Activated CD4-positive, alpha-beta memory T cell treated with anti-CD3 and anti-CD28 coated beads, Interleukin-2, amount 10 ng/mL, durations not matched to agents 7 days and 5 days (primary cell): ENCODE measurements at regions of chr1 and their contacts with region 1.

Region 1: GRCh38 chr1:20633190-20634064 is at the start of gene PINK1:
- DNase-seq: peak; percentile 90
- H3K4me3 Mint-ChIP-seq: peak within 1 kb of the TSS; percentile 77
- H3K27ac Mint-ChIP-seq: peak within 1 kb of the TSS; percentile 44
- H3K4me1 Mint-ChIP-seq: peaks cover 14% of the 10 kb centered on the region
- H3K27me3 Mint-ChIP-seq: peaks cover 9% of the 10 kb centered on the region
- total RNA-seq, gene PINK1: 6.6 TPM

Region 2: DNA sequence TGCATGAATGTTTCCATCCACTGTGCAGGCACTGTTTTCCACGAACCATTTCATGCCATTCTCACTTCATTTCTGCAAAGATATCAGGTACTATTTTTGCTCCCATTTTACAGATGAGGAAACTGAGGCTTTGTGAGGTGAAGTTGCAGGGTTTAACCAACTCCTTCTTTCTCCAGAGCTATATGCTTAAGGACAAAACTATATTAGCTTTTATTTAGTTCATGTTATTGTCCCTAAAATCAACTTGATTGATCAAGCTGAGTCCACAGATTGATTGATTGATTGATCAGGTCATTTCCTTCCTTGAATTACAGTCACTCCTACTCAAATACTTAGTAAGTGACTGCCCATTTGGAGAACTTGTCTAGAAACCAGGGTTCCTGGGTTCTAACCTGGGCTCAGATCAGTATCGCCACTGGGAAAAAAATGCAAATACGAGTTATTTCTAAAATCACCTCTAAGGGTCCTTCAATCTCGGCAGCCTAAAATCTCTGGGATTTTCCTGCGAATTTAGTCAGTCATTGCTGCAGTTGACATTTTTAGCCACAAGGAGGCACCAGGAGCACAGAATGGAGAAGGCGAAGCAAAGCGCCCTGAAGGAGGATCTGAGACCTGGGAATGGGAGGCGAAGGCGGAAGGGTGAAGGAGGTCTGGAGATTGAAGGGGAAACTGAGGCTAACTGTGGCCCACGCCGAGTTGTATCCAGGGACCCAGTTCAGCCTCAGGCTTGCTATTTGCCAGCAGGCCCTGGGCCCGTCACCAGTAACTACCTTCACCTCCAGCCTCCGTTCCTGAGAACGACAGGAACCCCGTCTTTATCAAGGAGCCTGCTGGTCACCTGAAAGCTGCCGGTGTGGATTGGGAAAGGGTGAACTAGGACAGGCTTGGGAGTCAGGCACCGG is 111.2 kb before region 1 on chr1:
- CTCF ChIA-PET with region 1: interaction called, 19 read pairs
- POLR2A ChIA-PET with region 1: no interaction called
- DNase-seq: peak; percentile 65
- H3K4me3 Mint-ChIP-seq: no peak overlapping the region
- H3K27ac Mint-ChIP-seq: no peak overlapping the region
- H3K4me1 Mint-ChIP-seq: peaks cover 7% of the 10 kb centered on the region
- H3K27me3 Mint-ChIP-seq: peaks cover 14% of the 10 kb centered on the region

Region 3: GRCh38 chr1:20574686-20575540 is 58.5 kb before region 1 on chr1:
- CTCF ChIA-PET with region 1: interaction called, 37 read pairs
- POLR2A ChIA-PET with region 1: no interaction called
- DNase-seq: peak; percentile 77
- H3K4me3 Mint-ChIP-seq: no peak overlapping the region
- H3K27ac Mint-ChIP-seq: no peak overlapping the region
- H3K4me1 Mint-ChIP-seq: no peaks in the 10 kb centered on the region
- H3K27me3 Mint-ChIP-seq: peaks cover 24% of the 10 kb centered on the region

Region 4: GRCh38 chr1:20645414-20645813 is 12.0 kb after region 1 on chr1:
- CTCF ChIA-PET with region 1: interaction called, 22 read pairs
- POLR2A ChIA-PET with region 1: interaction called, 6 read pairs
- DNase-seq: no peak
- H3K4me3 Mint-ChIP-seq: no peak overlapping the region
- H3K27ac Mint-ChIP-seq: no peak overlapping the region
- H3K4me1 Mint-ChIP-seq: no peaks in the 10 kb centered on the region
- H3K27me3 Mint-ChIP-seq: no peaks in the 10 kb centered on the region

Region 5: DNA sequence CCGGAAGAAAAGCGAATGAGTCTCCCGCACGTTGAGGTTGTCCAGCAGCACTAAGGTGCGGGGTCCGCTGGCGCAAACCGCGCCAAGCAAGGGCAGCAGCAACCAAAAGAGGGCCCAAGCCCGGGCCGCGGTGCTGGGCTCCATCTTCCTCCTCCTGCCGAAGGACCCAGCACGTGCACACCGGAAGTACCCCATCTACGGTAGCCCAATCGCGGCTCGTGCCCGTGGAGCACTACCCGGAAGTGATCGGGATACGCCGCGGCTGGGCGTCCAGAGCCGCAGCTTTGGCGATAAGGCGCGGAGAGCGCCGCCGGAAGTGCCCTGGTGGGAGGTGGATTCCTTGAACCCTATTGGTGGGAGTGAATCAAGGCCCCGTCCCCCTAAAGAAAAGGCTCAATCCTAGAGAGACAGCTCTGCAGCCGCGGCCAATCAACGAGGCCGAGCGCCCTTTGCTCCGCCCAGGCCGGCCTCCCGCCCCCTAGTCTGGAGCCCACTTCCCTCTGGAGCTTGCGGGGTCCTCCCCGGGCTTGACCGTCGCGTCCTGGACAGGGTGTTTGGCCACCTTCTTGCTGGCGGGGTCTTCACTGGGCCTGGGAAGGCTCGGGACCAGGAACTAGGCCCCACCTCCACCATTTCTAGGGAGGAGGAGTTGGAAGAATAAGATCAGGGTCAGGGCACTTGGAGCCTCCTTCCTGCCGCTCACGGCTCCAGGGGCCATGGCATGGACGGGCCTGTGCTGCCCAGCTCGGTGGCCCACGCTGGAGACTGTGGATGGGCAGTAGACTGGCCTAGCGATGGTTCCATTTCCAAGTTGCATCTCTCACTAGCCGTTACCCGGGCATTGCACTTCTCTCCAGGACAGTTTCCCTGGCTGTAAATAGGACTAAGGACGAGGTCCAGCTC is 28.0 kb after region 1 on chr1 and contains the start of gene DDOST:
- CTCF ChIA-PET with region 1: interaction called, 25 read pairs
- POLR2A ChIA-PET with region 1: interaction called, 19 read pairs
- DNase-seq: peak; percentile 96
- H3K4me3 Mint-ChIP-seq: peak within 1 kb of the TSS; percentile 99
- H3K27ac Mint-ChIP-seq: peak within 1 kb of the TSS; percentile 97
- H3K4me1 Mint-ChIP-seq: peaks cover 52% of the 10 kb centered on the region
- H3K27me3 Mint-ChIP-seq: no peaks in the 10 kb centered on the region
- total RNA-seq, gene DDOST: 171 to 182 TPM